HepG2 (cell line): ENCODE measurements at regions of chr5 and their contacts with region 1.

Region 1: DNA sequence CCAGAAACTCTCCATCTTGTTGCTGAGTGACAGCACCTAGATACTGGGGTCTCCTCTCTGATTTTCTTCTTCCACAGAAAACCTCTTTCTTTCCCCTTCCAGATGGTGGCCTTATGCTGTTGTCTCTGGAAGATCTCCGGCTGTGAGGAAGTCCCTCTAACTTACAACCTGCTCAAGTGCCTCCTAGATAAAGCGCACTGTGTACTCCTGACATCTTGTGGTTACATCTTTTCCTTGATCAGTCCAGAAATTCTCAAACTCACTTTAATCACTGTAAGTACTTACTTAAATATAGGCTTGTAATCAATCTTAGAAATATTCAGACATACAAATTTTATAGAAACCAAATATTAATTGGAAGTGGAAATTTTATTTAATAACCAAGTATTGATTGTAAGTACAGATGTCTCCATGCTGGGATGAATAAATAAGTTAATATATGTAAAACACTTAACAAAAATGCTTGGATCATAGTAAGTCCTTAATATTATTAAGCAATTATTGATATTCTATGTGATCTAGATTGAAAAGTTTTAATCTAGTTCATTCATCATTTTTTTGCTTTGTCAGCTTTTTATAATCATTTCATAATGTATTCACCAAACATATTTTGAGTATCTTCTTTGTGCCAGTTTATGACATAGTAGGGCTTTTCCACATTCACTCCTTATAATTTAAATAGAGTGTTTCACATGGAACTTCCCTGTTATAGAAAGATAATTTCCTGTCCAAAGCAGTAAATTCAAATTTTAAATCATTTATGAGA is 1381.4 kb upstream of the CDH6 start:
- DNase-seq: peak; percentile 31
- ATAC-seq: peak; percentile 79
- H3K4me3 ChIP-seq: no peak overlapping the region
- H3K27ac ChIP-seq: no peak overlapping the region
- H3K4me1 ChIP-seq: no peaks in the 10 kb centered on the region
- H3K27me3 ChIP-seq: no peaks in the 10 kb centered on the region
- CTCF ChIP-seq: peak; percentile 55
- EP300 ChIP-seq: no peak
- POLR2A ChIP-seq: no peak
- RAD21 ChIP-seq: no peak

Region 2: GRCh38 chr5:29367176-29367833 is 444.8 kb before region 1 on chr5:
- CTCF ChIA-PET with region 1: no interaction called
- POLR2A ChIA-PET with region 1: no interaction called
- in situ Hi-C with region 1: no loop called
- intact Hi-C with region 1: loop called (anchors 1 kb)
- DNase-seq: peak; percentile 12
- ATAC-seq: peak; percentile 88
- H3K4me3 ChIP-seq: no peak overlapping the region
- H3K27ac ChIP-seq: no peak overlapping the region
- H3K4me1 ChIP-seq: no peaks in the 10 kb centered on the region
- H3K27me3 ChIP-seq: no peaks in the 10 kb centered on the region
- CTCF ChIP-seq: peak; percentile 50
- EP300 ChIP-seq: no peak
- POLR2A ChIP-seq: no peak
- RAD21 ChIP-seq: no peak

Region 3: DNA sequence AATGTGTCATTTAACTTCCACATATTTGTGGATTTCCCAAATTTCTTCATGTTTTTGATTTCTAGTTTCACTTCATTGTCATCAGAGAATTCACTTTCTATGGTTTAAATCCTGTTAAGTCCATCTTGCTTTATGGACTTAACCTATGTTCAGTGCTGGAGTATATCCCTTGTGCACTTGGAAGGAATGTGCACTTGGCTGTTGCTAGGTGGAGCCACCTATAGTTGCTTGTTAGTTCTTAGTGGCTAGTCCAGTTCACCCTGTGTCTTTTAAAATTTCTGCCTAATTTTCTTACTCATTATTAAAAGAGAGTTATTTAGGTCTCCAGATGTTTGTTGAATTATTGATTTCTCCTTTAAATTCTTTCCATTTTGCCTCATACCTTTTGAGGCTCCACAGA is 91.1 kb before region 1 on chr5:
- CTCF ChIA-PET with region 1: no interaction called
- POLR2A ChIA-PET with region 1: no interaction called
- in situ Hi-C with region 1: no loop called
- intact Hi-C with region 1: loop called (anchors 10 kb)
- DNase-seq: peak; percentile 15
- ATAC-seq: peak; percentile 84
- H3K4me3 ChIP-seq: no peak overlapping the region
- H3K27ac ChIP-seq: no peak overlapping the region
- H3K4me1 ChIP-seq: no peaks in the 10 kb centered on the region
- H3K27me3 ChIP-seq: no peaks in the 10 kb centered on the region
- CTCF ChIP-seq: peak; percentile 16; the same call in 1 of the 2 replicates
- EP300 ChIP-seq: no peak
- POLR2A ChIP-seq: no peak
- RAD21 ChIP-seq: no peak

Region 4: DNA sequence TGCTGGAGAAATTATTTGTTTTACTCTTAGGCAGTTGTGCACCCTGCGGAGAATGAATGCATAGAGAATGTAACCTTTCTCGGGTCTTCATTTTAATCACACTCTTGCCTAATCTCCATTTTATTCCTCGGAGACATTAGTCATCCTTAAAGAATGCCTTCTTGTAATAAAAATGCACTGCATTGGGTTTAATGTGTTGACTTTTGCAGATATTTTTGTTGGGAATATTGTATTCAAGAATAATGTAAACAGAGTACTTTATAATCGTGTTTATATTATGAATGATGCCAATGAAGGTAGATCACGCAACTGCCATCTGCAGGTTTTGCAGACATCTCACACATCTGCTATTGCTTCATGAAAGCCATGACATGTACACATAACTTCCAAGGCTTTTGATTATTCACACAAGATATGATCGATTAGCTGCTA is 287.6 kb after region 1 on chr5:
- CTCF ChIA-PET with region 1: no interaction called
- POLR2A ChIA-PET with region 1: no interaction called
- in situ Hi-C with region 1: no loop called
- intact Hi-C with region 1: no loop called
- DNase-seq: no peak
- ATAC-seq: no peak
- H3K4me3 ChIP-seq: no peak overlapping the region
- H3K27ac ChIP-seq: no peak overlapping the region
- H3K4me1 ChIP-seq: no peaks in the 10 kb centered on the region
- H3K27me3 ChIP-seq: no peaks in the 10 kb centered on the region
- CTCF ChIP-seq: no peak
- EP300 ChIP-seq: no peak
- POLR2A ChIP-seq: no peak
- RAD21 ChIP-seq: no peak